BJ (cell line): ENCODE measurements at regions of chr1 and their contacts with region 1.

Region 1: GRCh38 chr1:23210351-23210785 is 6.9 kb downstream of the HTR1D start:
- DNase-seq: no peak
- H3K4me3 ChIP-seq: no peak overlapping the region
- H3K27me3 ChIP-seq: peaks cover 12% of the 10 kb centered on the region
- CTCF ChIP-seq: no peak

Region 2: GRCh38 chr1:23222331-23222730 is 12.0 kb after region 1 on chr1:
- CTCF ChIA-PET with region 1: interaction called, 16 read pairs
- POLR2A ChIA-PET with region 1: no interaction called
- DNase-seq: no peak
- H3K4me3 ChIP-seq: no peak overlapping the region
- H3K27me3 ChIP-seq: peaks cover 18% of the 10 kb centered on the region
- CTCF ChIP-seq: no peak

Region 3: DNA sequence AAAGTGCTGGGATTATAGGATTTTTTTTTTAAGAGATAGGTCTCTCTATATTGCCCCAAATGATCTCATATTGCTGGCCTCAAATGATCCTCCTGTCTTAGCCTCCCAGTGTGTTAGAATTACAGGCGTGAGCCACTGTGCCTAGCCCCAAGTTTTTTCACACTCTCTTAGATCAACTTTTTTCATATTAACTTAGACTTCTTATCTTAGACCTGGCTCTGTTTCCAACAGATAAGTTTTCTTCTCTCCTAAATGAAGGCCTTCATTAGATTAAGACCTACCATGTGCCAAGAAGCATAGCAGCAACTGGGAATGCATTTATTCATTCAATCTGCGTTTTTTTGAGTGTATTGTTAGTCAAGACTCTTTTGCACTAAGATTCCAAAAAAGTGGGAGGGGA is 27.1 kb after region 1 on chr1:
- CTCF ChIA-PET with region 1: no interaction called
- POLR2A ChIA-PET with region 1: no interaction called
- DNase-seq: no peak
- H3K4me3 ChIP-seq: no peak overlapping the region
- H3K27me3 ChIP-seq: no peaks in the 10 kb centered on the region
- CTCF ChIP-seq: no peak